SK-N-SH (cell line): ENCODE measurements at regions of chr16 and their contacts with region 1.

Region 1: DNA sequence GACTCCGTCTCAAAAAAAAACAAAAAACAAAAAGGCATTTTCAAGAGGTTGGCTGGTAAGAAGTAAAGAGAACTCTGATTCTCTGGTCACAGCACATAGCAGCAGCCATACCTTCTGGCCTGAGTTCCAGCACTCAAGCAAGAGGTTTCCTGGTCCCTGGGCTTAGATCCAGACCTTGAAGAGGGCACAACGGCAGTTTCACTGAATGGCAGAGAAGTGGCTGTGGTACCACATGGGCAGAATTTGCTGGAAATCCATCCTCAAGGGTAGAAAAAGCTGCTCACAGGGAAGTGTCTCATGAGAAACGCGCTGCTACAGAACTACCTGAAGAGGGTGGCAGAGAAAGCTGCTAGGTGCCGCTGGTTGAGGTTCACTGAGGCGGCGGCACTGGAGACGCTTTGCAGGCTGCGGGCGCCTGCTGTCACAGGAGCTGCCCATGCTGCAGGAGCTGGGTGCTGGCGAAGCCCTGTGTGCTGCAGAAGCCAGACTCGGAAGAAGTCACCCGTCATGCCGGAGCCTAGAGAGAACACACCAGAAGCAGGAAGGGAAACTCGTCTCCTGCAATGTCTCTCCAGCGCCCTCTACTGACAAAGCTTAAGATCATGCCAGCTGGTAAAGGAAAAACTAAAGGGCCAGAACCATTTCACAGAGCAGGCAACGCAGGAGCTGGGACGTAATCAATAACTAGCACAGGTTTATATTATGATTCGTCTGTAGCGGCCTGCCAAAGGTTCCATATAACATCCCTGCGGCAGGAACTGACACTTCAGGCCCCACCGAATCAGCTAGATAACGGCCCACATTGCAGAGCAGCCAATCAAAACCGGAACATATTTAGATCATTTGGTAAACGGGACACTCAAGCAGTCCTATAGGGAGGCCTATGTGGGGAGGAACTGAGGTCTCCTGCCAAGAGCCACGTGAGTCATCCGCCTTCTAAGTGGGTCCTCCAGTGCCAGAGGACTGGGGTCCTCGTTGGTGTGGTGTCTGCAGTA is 5.4 kb upstream of the ZNF213 start:
- DNase-seq: peak; percentile 65
- H3K4me3 ChIP-seq: peak overlapping the region in 1 of 2 experiments; percentile 41; a peak in 2 of 4 replicates
- H3K27ac ChIP-seq: peak overlapping the region; percentile 14 to 35; a peak in 3 of 4 replicates
- H3K4me1 ChIP-seq: peaks cover 4 to 7% of the 10 kb centered on the region in 2 experiments; a peak in 2 of 4 replicates
- H3K27me3 ChIP-seq: no peaks in the 10 kb centered on the region
- CTCF ChIP-seq: peak; percentile 87
- EP300 ChIP-seq: no peak
- RAD21 ChIP-seq: peak; percentile 66

Region 2: DNA sequence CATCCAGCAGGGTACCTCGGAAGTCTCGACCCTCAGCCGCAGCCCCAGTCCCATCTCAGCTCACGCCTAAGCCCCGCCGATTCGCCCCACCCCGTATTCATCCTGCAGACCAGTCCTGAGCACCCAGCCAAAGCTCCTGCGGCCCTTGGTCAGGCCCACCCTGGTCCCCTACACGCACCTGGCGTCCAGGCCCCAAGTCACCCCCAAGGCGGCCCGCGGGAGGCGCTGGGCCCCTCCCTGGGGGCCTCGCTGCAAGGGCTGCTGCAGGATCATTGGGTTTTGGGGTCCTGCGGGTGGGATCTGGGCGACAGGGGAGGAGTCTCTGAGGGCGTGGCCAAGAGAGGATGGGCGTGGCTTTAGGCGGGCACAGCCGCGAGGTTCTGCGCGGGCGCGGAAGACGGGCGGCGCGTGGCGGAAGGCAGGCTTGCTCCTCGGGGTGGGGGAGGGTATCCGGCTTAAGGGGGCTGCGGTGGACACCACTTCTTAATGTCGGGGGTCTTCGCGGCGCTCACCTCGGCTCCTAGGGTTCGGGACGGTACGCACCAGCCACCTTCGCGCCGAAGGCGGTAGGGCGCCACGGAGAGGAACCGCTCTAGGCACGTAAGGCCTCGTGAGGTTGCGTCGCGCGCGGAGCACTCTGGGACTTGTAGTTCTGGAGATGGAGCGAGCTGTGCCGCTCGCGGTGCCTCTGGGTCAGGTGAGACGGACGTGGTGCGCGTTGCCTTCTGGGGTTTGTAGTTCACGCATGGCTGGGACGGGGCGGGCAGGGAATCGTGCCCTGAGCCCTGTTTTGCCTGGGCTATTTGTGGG is 105.6 kb before region 1 on chr16 and contains the starts of genes HCFC1R1 and THOC6:
- CTCF ChIA-PET with region 1: interaction called, 36 read pairs
- POLR2A ChIA-PET with region 1: interaction called, 3 read pairs
- DNase-seq: peak; percentile 92
- H3K4me3 ChIP-seq: peak within 1 kb of the TSS; percentile 80 to 88
- H3K27ac ChIP-seq: peak within 1 kb of the TSS; percentile 94 to 99
- H3K4me1 ChIP-seq: peaks cover 8 to 30% of the 10 kb centered on the region in 2 experiments; a peak in 3 of 4 replicates
- H3K27me3 ChIP-seq: no peaks in the 10 kb centered on the region
- CTCF ChIP-seq: no peak
- EP300 ChIP-seq: no peak; a peak in 1 of 4 replicates
- RAD21 ChIP-seq: no peak
- polyA plus RNA-seq, gene HCFC1R1: 34.7 and 54.9 TPM in 2 replicates
- polyA plus RNA-seq, gene THOC6: 35.7 and 37.7 TPM in 2 replicates

Region 3: DNA sequence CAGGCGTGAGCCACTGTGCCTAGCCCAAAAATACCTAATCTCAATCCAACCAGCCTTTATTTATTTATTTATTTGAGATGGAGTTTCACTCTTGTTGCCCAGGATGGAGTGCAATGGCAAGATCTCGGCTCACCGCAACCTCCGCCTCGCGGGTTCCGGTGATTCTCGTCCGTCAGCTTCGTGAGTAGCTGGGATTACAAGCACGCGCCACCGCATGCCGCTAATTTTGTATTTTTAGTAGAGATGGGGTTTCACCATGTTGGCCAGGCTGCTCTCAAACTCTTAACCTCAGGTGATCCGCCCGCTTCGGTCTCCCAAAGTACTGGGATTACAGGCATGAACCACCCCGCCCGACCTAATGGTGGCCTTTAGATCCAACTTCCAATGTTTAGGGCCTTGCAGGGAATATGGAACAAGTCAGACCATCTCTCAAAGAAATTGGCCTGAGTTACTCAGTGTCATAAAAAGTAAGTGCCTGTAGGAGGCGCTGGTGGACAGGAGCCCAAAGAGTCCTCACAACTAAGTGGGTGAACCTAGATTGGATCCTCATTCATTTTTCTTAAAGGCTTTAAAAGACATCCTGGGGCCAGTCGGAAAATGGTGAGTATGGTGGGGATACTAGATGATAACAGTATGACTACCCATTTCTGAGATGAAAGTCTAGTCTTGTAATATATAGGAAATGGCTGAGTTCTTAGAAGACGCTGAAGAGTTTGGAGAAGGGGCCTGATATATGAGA is 35.0 kb before region 1 on chr16:
- CTCF ChIA-PET with region 1: interaction called, 15 read pairs
- POLR2A ChIA-PET with region 1: no interaction called
- DNase-seq: peak; percentile 59
- H3K4me3 ChIP-seq: no peak overlapping the region; a peak in 1 of 4 replicates
- H3K27ac ChIP-seq: no peak overlapping the region
- H3K4me1 ChIP-seq: peaks cover 0 to under 1% of the 10 kb centered on the region in 2 experiments; a peak in 2 of 4 replicates
- H3K27me3 ChIP-seq: peaks cover 38% of the 10 kb centered on the region
- CTCF ChIP-seq: peak; percentile 62
- EP300 ChIP-seq: no peak
- RAD21 ChIP-seq: peak; percentile 52

Region 4: GRCh38 chr16:3106205-3106928 is 23.1 kb before region 1 on chr16:
- CTCF ChIA-PET with region 1: interaction called, 64 read pairs
- POLR2A ChIA-PET with region 1: no interaction called
- DNase-seq: peak; percentile 99
- H3K4me3 ChIP-seq: peak overlapping the region; percentile 62 to 73
- H3K27ac ChIP-seq: peak overlapping the region in 1 of 2 experiments; percentile 75; a peak in 1 of 4 replicates
- H3K4me1 ChIP-seq: peaks cover 0 to 3% of the 10 kb centered on the region in 2 experiments; a peak in 1 of 4 replicates
- H3K27me3 ChIP-seq: no peaks in the 10 kb centered on the region
- CTCF ChIP-seq: no peak
- EP300 ChIP-seq: no peak
- RAD21 ChIP-seq: no peak

Region 5: GRCh38 chr16:3143612-3144320 is 14.3 kb after region 1 on chr16:
- CTCF ChIA-PET with region 1: interaction called, 62 read pairs
- POLR2A ChIA-PET with region 1: interaction called, 4 read pairs
- DNase-seq: peak; percentile 12
- H3K4me3 ChIP-seq: no peak overlapping the region
- H3K27ac ChIP-seq: no peak overlapping the region
- H3K4me1 ChIP-seq: peaks cover 0 to 7% of the 10 kb centered on the region in 2 experiments; a peak in 1 of 4 replicates
- H3K27me3 ChIP-seq: no peaks in the 10 kb centered on the region
- CTCF ChIP-seq: no peak
- EP300 ChIP-seq: no peak
- RAD21 ChIP-seq: no peak

Region 6: DNA sequence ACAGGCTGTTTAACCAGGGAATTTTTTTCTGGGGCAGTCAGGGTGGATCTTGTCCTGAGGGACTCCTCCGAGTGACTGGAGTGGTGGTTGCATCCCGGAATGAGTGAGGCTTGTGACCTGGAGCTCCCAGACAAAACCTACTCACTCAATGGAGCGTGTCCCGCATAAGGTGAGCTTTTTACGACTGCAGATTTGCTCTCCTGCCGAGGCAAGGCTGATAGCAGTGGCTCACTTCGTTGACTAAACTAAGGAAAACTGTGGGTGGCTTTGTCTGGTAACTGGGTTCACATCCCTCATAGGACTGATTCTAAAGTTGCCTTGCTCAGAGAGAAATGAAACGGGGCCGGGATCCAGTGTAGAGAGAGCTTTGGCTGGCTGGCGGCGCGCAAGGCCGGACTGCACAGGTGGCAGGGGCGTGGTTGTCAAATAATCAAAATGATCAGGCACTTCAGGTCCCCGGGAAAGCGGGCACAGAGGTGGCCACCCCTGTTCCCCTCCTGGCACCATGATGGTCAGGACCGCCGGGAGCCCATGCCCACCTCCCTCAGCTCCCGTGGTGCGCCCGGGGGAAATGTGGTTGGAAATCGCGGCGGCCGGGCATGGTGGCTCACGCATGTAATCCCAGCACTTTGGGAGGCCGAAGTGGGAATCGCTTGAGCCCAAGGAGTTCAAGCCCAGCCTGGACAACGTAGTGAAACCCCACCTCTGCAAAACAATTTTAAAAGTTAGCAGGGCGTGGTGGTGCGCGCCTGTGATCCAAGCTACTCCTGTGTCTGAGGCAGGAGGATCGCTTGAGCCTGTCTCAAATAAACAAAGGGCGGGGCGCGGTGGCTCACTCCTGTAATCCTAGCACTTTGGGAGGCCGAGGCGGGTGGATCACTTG is 31.9 kb after region 1 on chr16:
- CTCF ChIA-PET with region 1: interaction called, 13 read pairs
- POLR2A ChIA-PET with region 1: interaction called, 4 read pairs
- DNase-seq: no peak
- H3K4me3 ChIP-seq: no peak overlapping the region
- H3K27ac ChIP-seq: no peak overlapping the region
- H3K4me1 ChIP-seq: peaks cover 0 to 8% of the 10 kb centered on the region in 2 experiments; a peak in 1 of 4 replicates
- H3K27me3 ChIP-seq: no peaks in the 10 kb centered on the region; the same call in 1 of the 2 replicates
- CTCF ChIP-seq: no peak
- EP300 ChIP-seq: no peak
- RAD21 ChIP-seq: no peak

Region 7: GRCh38 chr16:3198334-3199072 is 69.1 kb after region 1 on chr16:
- CTCF ChIA-PET with region 1: no interaction called
- POLR2A ChIA-PET with region 1: no interaction called
- DNase-seq: no peak
- H3K4me3 ChIP-seq: no peak overlapping the region
- H3K27ac ChIP-seq: no peak overlapping the region
- H3K4me1 ChIP-seq: no peaks in the 10 kb centered on the region
- H3K27me3 ChIP-seq: peaks cover 37% of the 10 kb centered on the region
- CTCF ChIP-seq: no peak
- EP300 ChIP-seq: no peak
- RAD21 ChIP-seq: no peak

Region 8: GRCh38 chr16:3223913-3224515 is 94.6 kb after region 1 on chr16:
- CTCF ChIA-PET with region 1: no interaction called
- POLR2A ChIA-PET with region 1: no interaction called
- DNase-seq: no peak
- H3K4me3 ChIP-seq: no peak overlapping the region; a peak in 1 of 4 replicates
- H3K27ac ChIP-seq: no peak overlapping the region
- H3K4me1 ChIP-seq: no peaks in the 10 kb centered on the region
- H3K27me3 ChIP-seq: no peaks in the 10 kb centered on the region
- CTCF ChIP-seq: no peak
- EP300 ChIP-seq: no peak
- RAD21 ChIP-seq: no peak

Region 9: DNA sequence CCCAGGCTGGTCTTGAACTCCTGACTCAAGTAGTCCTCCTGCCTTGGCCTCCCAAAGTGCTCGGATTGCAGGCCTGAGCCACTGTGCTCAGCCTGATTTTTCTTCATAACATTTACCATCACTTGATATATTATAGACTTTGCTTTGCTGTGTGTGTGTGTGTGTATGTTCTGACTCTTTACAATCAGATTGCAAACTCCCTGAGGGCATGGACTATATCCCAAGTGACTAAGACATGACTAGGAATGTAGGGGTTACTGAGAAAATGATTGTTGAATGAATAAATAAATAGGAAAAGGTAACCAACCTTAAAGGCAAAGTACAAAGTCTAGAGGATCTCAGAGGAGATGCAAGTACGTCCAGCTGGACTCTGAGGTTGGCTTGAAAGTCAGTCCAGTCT is 216.6 kb after region 1 on chr16:
- CTCF ChIA-PET with region 1: no interaction called
- POLR2A ChIA-PET with region 1: no interaction called
- DNase-seq: no peak
- H3K4me3 ChIP-seq: no peak overlapping the region
- H3K27ac ChIP-seq: no peak overlapping the region
- H3K4me1 ChIP-seq: no peaks in the 10 kb centered on the region; a peak in 1 of 4 replicates
- H3K27me3 ChIP-seq: peaks cover 36% of the 10 kb centered on the region
- CTCF ChIP-seq: no peak
- EP300 ChIP-seq: no peak
- RAD21 ChIP-seq: no peak